ENCODE measurements at regions of chr1 and their contacts with region 1.

Region 1: DNA sequence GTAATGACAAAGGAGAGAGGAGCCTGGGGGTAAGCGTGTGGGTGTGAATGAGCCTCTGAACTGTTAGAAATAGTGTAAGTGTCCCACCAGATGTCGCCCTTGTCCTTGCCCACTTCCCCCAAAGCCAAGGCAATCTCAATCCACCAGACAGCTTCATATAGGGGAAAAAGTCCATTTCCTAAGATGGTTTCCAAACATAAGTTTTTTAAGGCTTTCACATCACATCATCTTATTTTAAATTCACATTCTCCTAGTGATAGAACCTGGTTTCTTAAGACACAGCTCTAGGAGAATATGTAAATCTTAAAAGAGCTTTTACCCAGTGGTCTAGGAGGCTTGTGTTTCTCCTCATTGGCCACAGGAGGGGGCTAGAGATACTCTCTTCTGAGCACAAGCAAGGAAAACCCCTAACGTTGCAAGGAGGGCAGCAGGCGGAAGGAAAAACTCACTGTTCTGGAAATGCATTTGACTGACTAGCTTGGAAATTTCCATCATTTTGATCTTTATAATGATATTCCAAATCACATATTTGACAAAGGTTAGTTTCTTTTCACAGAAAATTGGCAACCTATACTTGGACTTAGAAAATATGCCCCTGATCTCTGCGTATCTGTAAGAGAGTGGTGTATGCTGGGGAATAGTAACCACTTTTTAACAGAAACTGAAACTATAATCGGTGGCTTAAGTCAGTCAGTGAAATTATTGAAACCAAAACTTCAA is 51.9 kb upstream of the LPAR3 start:
- DNase-seq: peak; percentile 72
- H3K4me3 Mint-ChIP-seq: peak overlapping the region; percentile 75
- H3K27ac Mint-ChIP-seq: peak overlapping the region; percentile 90
- H3K4me1 Mint-ChIP-seq: peaks cover 26% of the 10 kb centered on the region
- H3K27me3 Mint-ChIP-seq: no peaks in the 10 kb centered on the region

Region 2: DNA sequence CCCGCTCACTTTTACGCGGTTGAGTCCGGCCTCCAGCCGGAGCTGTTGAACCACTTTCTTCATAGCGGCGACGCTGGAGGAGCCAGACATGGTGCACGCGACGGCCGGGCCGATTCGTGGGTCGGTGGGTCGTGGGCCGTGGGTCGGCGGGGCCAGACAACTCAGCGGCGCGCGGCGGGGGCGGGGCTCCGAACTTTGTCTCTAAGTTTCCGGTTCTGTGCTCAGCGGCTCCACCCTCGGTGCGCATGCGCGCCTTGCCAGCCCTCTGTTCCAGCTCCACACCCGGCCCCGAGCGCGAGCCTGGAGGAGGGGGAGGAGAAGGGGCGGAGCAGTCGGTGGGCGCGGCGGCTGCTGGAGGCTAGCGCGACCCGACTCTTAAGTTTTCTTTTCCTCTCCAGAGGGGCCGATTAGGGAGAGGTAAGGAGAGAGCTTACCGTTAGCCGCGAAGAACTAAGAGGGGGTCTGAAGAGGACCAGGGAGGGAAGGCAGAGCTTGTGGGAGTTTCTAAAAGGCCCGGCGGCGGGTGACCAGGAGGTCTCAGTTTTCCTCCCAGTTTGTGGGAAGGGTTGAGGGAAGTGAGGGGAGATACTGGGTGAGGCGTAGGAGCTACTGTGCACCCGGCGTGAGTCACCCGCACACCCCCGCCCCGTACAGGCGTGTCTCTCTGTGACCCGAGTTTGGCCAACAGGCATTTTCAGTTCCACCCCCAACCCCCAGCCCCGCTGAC is 438.8 kb before region 1 on chr1 and contains the starts of genes GNG5 and SPATA1:
- CTCF ChIA-PET with region 1: no interaction called
- POLR2A ChIA-PET with region 1: no interaction called
- intact Hi-C with region 1: loop called (anchors 10 kb)
- DNase-seq: peak; percentile 98
- H3K4me3 Mint-ChIP-seq: peak within 1 kb of the TSS; percentile 95
- H3K27ac Mint-ChIP-seq: peak within 1 kb of the TSS; percentile 97
- H3K4me1 Mint-ChIP-seq: peaks cover 35% of the 10 kb centered on the region
- H3K27me3 Mint-ChIP-seq: no peaks in the 10 kb centered on the region
- total RNA-seq, gene GNG5: 139 to 143 TPM
- total RNA-seq, gene SPATA1: 3.2 to 3.8 TPM

Region 3: GRCh38 chr1:84892705-84893618 is 52.0 kb before region 1 on chr1 and contains the start of gene LPAR3:
- CTCF ChIA-PET with region 1: no interaction called
- POLR2A ChIA-PET with region 1: no interaction called
- intact Hi-C with region 1: no loop called
- DNase-seq: peak; percentile 50
- H3K4me3 Mint-ChIP-seq: peak within 1 kb of the TSS; percentile 65
- H3K27ac Mint-ChIP-seq: no peak within 1 kb of the TSS
- H3K4me1 Mint-ChIP-seq: peaks cover 18% of the 10 kb centered on the region
- H3K27me3 Mint-ChIP-seq: peaks cover 27% of the 10 kb centered on the region
- total RNA-seq, gene LPAR3: 0.36 to 0.83 TPM

Region 4: GRCh38 chr1:84988588-84988987 is 43.7 kb after region 1 on chr1:
- CTCF ChIA-PET with region 1: interaction called, 44 read pairs
- POLR2A ChIA-PET with region 1: no interaction called
- intact Hi-C with region 1: loop called (anchors 1 kb)
- DNase-seq: peak; percentile 59
- H3K4me3 Mint-ChIP-seq: peak overlapping the region; percentile 28
- H3K27ac Mint-ChIP-seq: peak overlapping the region; percentile 40
- H3K4me1 Mint-ChIP-seq: peaks cover 52% of the 10 kb centered on the region
- H3K27me3 Mint-ChIP-seq: no peaks in the 10 kb centered on the region

Region 5: DNA sequence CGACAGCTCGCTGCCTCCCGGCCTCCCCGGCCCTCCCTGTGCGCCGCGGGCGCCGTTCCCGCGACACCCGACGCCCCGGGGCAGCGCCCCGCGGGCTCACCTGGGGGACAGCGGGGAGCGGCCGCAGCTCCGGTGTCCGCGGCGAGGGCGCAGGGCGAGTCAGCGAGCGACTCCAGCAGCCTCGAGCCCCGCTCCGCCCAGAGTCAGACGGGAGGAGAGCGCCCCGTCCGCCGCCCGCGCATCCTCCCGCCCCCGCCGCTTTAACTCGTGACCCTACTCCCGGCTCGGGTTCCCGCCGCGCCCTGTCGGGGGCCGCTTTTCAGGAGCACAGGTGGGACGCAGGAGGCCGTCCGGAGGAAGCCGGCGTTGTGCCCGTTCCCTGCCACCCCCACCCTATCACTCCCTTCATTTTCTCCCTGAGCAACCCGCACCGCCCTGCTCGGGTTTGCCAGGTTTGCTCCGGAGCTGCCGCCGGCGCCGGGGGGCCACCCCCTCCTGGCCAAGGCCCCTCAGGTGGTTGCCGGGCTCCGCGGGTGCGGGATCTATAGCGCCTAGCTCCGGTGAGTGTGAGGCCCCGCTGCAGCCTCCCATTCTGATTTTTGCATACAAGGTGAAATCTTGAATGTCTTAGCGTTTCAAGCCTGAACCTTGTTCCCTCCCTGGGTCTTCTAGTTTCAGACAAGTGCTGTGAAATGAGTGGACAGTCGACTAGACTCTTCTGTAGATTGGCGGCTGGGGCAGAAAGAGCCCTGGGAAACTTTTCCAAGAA is 103.6 kb after region 1 on chr1 and contains the start of gene MCOLN3:
- CTCF ChIA-PET with region 1: interaction called, 18 read pairs
- POLR2A ChIA-PET with region 1: interaction called, 3 read pairs
- intact Hi-C with region 1: no loop called
- DNase-seq: peak; percentile 54
- H3K4me3 Mint-ChIP-seq: peak within 1 kb of the TSS; percentile 64
- H3K27ac Mint-ChIP-seq: no peak within 1 kb of the TSS
- H3K4me1 Mint-ChIP-seq: peaks cover 17% of the 10 kb centered on the region
- H3K27me3 Mint-ChIP-seq: peaks cover 39% of the 10 kb centered on the region
- total RNA-seq, gene MCOLN3: 0.22 to 0.62 TPM

Region 6: GRCh38 chr1:85091671-85092280 is 146.8 kb after region 1 on chr1:
- CTCF ChIA-PET with region 1: interaction called, 5 read pairs
- POLR2A ChIA-PET with region 1: no interaction called
- intact Hi-C with region 1: loop called (anchors 5 kb)
- DNase-seq: peak; percentile 53
- H3K4me3 Mint-ChIP-seq: peak overlapping the region; percentile 49
- H3K27ac Mint-ChIP-seq: no peak overlapping the region
- H3K4me1 Mint-ChIP-seq: peaks cover 7% of the 10 kb centered on the region
- H3K27me3 Mint-ChIP-seq: peaks cover 6% of the 10 kb centered on the region

Region 7: DNA sequence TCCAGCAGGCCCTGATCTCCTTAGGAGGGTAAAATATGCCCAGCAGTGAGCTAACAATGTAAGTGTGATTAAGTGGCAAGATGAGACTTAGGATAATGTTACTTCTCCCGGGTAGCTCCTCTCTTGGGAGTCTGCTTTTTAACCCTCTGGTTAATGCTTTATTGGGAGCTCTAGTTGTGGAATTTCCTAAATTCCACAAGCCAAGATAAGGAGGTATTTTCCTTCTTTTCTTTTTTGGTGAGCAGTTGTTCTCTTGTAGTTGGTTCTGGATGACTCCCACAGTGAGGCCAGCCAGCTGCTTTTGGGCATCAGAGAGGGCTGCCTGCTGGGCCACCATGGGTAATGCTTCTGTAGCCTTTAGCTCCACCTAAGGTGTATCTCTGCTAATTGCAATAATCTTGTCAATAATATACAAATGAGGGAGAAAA is 295.3 kb after region 1 on chr1:
- CTCF ChIA-PET with region 1: interaction called, 19 read pairs
- POLR2A ChIA-PET with region 1: no interaction called
- intact Hi-C with region 1: loop called (anchors 1 kb)
- DNase-seq: peak; percentile 34
- H3K4me3 Mint-ChIP-seq: no peak overlapping the region
- H3K27ac Mint-ChIP-seq: no peak overlapping the region
- H3K4me1 Mint-ChIP-seq: peaks cover 9% of the 10 kb centered on the region
- H3K27me3 Mint-ChIP-seq: peaks cover 4% of the 10 kb centered on the region

Region 8: GRCh38 chr1:85297855-85298629 is 353.1 kb after region 1 on chr1:
- CTCF ChIA-PET with region 1: no interaction called
- POLR2A ChIA-PET with region 1: no interaction called
- intact Hi-C with region 1: loop called (anchors 1 kb)
- DNase-seq: peak; percentile 91
- H3K4me3 Mint-ChIP-seq: peak overlapping the region; percentile 42
- H3K27ac Mint-ChIP-seq: peak overlapping the region; percentile 71
- H3K4me1 Mint-ChIP-seq: peaks cover 27% of the 10 kb centered on the region
- H3K27me3 Mint-ChIP-seq: peaks cover 38% of the 10 kb centered on the region